Naive thymus-derived CD4-positive, alpha-beta T cell (primary cell): ENCODE measurements at regions of chr19 and their contacts with region 1.

Region 1: DNA sequence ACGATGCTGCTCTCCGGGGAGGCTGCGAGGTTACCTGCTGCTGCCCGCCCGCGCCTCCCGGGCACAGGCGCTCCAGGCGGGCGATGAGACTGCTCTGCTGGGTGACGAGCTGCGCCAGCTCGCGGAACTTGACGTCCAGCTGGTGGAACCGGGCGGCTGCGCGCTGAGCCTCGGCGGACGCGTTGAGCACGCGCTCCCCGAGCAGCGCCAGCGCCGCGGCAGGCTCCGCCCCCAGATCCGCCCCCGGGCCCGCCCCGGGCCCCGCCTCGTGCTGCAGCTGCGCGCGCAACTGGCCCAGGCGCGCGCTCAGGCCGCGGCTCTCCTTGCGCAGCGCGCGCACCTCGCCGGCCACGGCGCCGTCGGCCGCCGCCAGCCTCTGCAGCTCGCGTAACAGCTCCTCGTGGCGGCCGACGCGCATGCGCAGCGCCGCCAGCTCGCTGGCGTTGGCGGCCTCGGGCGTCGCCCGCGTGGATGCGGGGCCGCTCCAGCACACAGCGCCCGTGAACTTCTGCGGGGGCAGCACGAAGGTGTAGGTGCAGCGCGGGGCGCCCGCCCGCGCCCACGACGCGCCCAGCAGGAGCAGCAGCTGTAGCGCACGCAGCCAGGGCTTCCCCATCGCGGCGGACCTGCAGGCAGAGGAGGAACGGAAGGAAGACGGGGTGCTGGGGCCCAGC is 6.4 kb downstream of the ANGPTL6 start:
- DNase-seq: peak; percentile 86 to 98 (median 92)
- ATAC-seq: peak; percentile 95
- H3K4me3 ChIP-seq: peak overlapping the region; percentile 48
- H3K4me3 Mint-ChIP-seq: peak overlapping the region; percentile 27 to 73 (median 60)
- H3K27ac ChIP-seq: peak overlapping the region; percentile 77
- H3K27ac Mint-ChIP-seq: peak overlapping the region in 8 of 9 donors; percentile 41 to 92 (median 74)
- H3K4me1 ChIP-seq: peaks cover 21 to 22% of the 10 kb centered on the region in 2 donors
- H3K4me1 Mint-ChIP-seq: peaks cover 0 to 35% (median 25%) of the 10 kb centered on the region in 7 donors
- H3K27me3 ChIP-seq: no peaks in the 10 kb centered on the region
- H3K27me3 Mint-ChIP-seq: no peaks in the 10 kb centered on the region

Region 2: GRCh38 chr19:9671655-9672054 is 424.4 kb before region 1 on chr19:
- CTCF ChIA-PET with region 1: no interaction called
- POLR2A ChIA-PET with region 1: no interaction called
- intact Hi-C with region 1: no loop called
- DNase-seq: no peak
- ATAC-seq: no peak
- H3K4me3 ChIP-seq: no peak overlapping the region
- H3K4me3 Mint-ChIP-seq: peak overlapping the region in 5 of 10 donors; percentile 9 to 62 (median 34)
- H3K27ac ChIP-seq: no peak overlapping the region
- H3K27ac Mint-ChIP-seq: no peak overlapping the region
- H3K4me1 ChIP-seq: peaks cover 0 to 8% of the 10 kb centered on the region in 2 donors
- H3K4me1 Mint-ChIP-seq: peaks cover 11 to 53% (median 43%) of the 10 kb centered on the region in 7 donors
- H3K27me3 ChIP-seq: no peaks in the 10 kb centered on the region
- H3K27me3 Mint-ChIP-seq: no peaks in the 10 kb centered on the region

Region 3: GRCh38 chr19:10085641-10086590 is 10.2 kb before region 1 on chr19 and contains the start of gene SHFL:
- CTCF ChIA-PET with region 1: no interaction called
- POLR2A ChIA-PET with region 1: interaction called, 7 read pairs
- intact Hi-C with region 1: loop called (anchors 1 kb)
- DNase-seq: peak; percentile 71 to 90 (median 83)
- ATAC-seq: peak; percentile 98
- H3K4me3 ChIP-seq: peak within 1 kb of the TSS; percentile 94
- H3K4me3 Mint-ChIP-seq: peak within 1 kb of the TSS; percentile 75 to 92 (median 90)
- H3K27ac ChIP-seq: peak within 1 kb of the TSS; percentile 90
- H3K27ac Mint-ChIP-seq: peak within 1 kb of the TSS; percentile 81 to 92 (median 88)
- H3K4me1 ChIP-seq: peaks cover 4 to 9% of the 10 kb centered on the region in 2 donors
- H3K4me1 Mint-ChIP-seq: peaks cover 8 to 21% (median 8%) of the 10 kb centered on the region in 7 donors
- H3K27me3 ChIP-seq: no peaks in the 10 kb centered on the region
- H3K27me3 Mint-ChIP-seq: no peaks in the 10 kb centered on the region
- total RNA-seq, gene SHFL: 67.8 to 112 (median 102) TPM

Region 4: GRCh38 chr19:10112895-10113591 is 17.0 kb after region 1 on chr19:
- CTCF ChIA-PET with region 1: interaction called, 5 read pairs
- POLR2A ChIA-PET with region 1: interaction called, 60 read pairs
- intact Hi-C with region 1: loop called (anchors 1 kb)
- DNase-seq: peak; percentile 30 to 72 (median 52)
- ATAC-seq: peak; percentile 65
- H3K4me3 ChIP-seq: peak overlapping the region; percentile 33
- H3K4me3 Mint-ChIP-seq: peak overlapping the region in 9 of 10 donors; percentile 15 to 75 (median 50)
- H3K27ac ChIP-seq: peak overlapping the region; percentile 60
- H3K27ac Mint-ChIP-seq: peak overlapping the region; percentile 51 to 92 (median 83)
- H3K4me1 ChIP-seq: peaks cover 26 to 39% of the 10 kb centered on the region in 2 donors
- H3K4me1 Mint-ChIP-seq: peaks cover 0 to 43% (median 34%) of the 10 kb centered on the region in 7 donors
- H3K27me3 ChIP-seq: no peaks in the 10 kb centered on the region
- H3K27me3 Mint-ChIP-seq: no peaks in the 10 kb centered on the region